Sigmoid colon (tissue), 7 donors: ENCODE measurements at regions of chr15 and their contacts with region 1.

Region 1: GRCh38 chr15:27059610-27060202 is 88.7 kb downstream of the GABRG3 start:
- DNase-seq: no peak
- H3K4me3 ChIP-seq: no peak overlapping the region
- H3K27ac ChIP-seq: no peak overlapping the region
- H3K4me1 ChIP-seq: no peaks in the 10 kb centered on the region
- H3K27me3 ChIP-seq: no peaks in the 10 kb centered on the region
- CTCF ChIP-seq: peak in 2 of 4 experiments; percentile 48 to 54
- EP300 ChIP-seq: no peak
- POLR2A ChIP-seq: no peak

Region 2: DNA sequence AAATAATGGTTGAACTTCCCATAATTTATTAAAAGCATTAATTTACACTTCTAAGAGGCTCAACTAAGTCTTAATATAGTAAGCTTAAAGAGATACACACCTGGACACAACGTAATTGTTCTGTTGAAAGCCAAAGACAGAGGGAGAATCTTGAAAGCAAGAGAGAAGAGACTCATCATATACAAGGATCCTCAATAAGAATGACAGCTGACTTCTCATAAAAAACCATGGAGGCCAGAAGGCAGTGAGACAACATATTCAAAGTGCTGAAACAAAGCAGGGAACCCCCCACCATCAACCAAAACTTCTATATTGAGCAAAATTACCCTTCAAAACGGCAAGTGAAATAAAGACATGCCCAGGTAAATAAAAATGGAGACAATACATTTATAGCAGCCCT is 105.3 kb before region 1 on chr15:
- intact Hi-C with region 1: no loop called
- DNase-seq: no peak
- H3K4me3 ChIP-seq: no peak overlapping the region
- H3K27ac ChIP-seq: no peak overlapping the region
- H3K4me1 ChIP-seq: no peaks in the 10 kb centered on the region
- H3K27me3 ChIP-seq: no peaks in the 10 kb centered on the region
- CTCF ChIP-seq: no peak
- EP300 ChIP-seq: no peak
- POLR2A ChIP-seq: no peak

Region 3: GRCh38 chr15:27358751-27359434 is 299.2 kb after region 1 on chr15:
- intact Hi-C with region 1: loop called (anchors 10 kb)
- DNase-seq: no peak
- H3K4me3 ChIP-seq: no peak overlapping the region
- H3K27ac ChIP-seq: no peak overlapping the region
- H3K4me1 ChIP-seq: no peaks in the 10 kb centered on the region
- H3K27me3 ChIP-seq: peaks cover 0 to 6% (median 0%) of the 10 kb centered on the region in 3 donors
- CTCF ChIP-seq: peak in 3 of 4 experiments; percentile 28 to 64 (median 44)
- EP300 ChIP-seq: no peak
- POLR2A ChIP-seq: no peak